ENCODE measurements at regions of chr17 and their contacts with region 1.

Region 1: DNA sequence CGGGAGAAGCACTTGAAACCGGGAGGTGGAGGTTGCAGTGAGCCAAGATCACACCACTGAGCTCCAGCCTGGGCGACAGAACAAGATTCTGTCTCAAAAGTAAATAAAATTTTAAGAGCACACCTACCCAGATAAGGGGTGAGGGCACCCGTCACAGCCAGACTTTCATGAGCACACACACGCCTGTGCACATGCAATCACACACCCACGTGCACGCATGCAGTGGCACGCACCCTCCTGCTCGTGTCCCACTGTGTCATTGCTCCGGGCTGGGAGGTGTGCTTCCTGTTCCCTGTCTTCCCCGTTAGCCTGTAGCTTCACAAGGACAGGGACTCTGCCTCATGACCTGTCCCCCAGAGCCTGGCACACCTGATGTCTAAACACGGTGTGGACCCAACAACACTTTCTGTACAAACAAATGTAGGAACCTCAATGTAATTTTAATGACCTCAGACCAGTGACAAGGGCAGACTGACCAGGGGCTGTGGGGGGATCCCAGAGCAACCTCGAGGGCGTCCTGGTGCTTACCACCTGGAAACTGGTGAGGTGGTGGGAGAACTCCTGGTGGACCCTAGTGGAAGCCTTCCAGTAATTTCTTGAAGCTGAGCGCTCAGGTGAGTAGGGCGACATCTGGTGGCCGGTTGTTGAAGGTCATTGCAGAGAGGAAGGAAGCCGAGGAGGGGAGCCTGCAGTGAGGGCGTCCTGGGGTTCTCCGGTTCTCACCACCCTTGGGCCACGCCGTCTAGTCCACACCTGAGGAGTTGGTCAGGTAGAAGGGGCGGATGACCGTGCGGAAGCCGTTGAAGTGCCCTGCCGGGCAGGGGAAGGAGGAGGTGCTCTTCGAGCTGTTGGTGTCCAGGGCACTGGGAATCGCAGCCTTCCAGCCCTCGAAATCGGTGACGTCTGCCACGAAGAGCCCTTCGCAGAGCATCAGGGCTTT is 8.6 kb downstream of the LGALS3BP start:
- DNase-seq: peak; percentile 70 to 95 (median 86)

Region 2: GRCh38 chr17:78903101-78903779 is 67.9 kb before region 1 on chr17 and contains the start of gene CEP295NL:
- intact Hi-C with region 1: loop called (anchors 10 kb)
- DNase-seq: peak in 11 of 42 donors; percentile 42 to 69 (median 57)